Body of pancreas (tissue), 4 donors: ENCODE measurements at regions of chr3 and their contacts with region 1.

Region 1: DNA sequence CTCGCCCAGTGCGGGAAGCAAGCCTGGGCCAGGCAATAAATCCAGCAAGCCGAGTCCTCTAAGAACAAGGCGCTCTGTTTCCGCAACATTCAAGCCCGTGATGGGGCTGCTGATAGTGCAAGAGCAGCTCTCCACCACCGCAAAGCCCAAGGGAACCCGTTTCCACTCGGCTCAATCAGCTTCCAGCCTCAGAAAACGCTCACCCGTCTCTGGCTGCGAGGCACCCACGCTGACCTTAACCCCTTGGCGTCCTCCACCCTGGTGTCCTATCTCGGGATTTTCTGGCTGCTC is 17.8 kb downstream of the SPATA12 start:
- DNase-seq: peak; percentile 48 to 67 (median 56)
- ATAC-seq: peak; percentile 45
- H3K4me3 ChIP-seq: peak overlapping the region; percentile 41 to 88
- H3K27ac ChIP-seq: peak overlapping the region; percentile 62 to 84 (median 71)
- H3K4me1 ChIP-seq: peaks cover 21% of the 10 kb centered on the region
- H3K27me3 ChIP-seq: no peaks in the 10 kb centered on the region
- CTCF ChIP-seq: no peak
- POLR2A ChIP-seq: no peak

Region 2: GRCh38 chr3:56997675-56998074 is 80.6 kb before region 1 on chr3:
- intact Hi-C with region 1: loop called (anchors 5 kb)
- DNase-seq: no peak
- ATAC-seq: peak; percentile 52
- H3K4me3 ChIP-seq: no peak overlapping the region
- H3K27ac ChIP-seq: peak overlapping the region in 3 of 4 donors; percentile 60 to 72 (median 67)
- H3K4me1 ChIP-seq: peaks cover 30% of the 10 kb centered on the region
- H3K27me3 ChIP-seq: no peaks in the 10 kb centered on the region
- CTCF ChIP-seq: no peak
- POLR2A ChIP-seq: no peak